Endothelial cell of umbilical vein (primary cell): ENCODE measurements at regions of chr4 and their contacts with region 1.

Region 1: DNA sequence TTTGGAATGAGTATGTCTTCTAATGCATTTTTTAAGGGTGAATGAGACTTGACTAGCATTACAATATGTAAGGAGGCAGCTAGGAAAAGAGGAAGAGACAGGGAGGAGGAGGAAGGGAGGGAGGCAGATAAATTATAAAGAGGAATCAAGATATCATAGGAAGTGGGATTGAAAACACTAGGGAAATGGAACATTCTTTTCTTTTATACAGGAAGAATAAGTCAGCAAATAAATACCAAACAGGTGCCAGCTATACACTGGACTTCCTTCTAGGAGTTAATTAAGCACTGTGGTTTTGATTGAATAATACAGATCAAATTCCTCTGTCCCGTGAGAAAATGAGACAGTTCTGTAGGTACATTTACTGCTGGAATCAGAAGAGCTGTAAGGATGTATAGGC is 78.6 kb downstream of the PACRGL start:
- DNase-seq: peak; percentile 85
- H3K4me3 ChIP-seq: no peak overlapping the region
- H3K27ac ChIP-seq: peak overlapping the region; percentile 80
- H3K4me1 ChIP-seq: peaks cover 18% of the 10 kb centered on the region
- H3K27me3 ChIP-seq: no peaks in the 10 kb centered on the region
- CTCF ChIP-seq: no peak
- POLR2A ChIP-seq: peak; percentile 60

Region 2: GRCh38 chr4:21012851-21013331 is 234.0 kb after region 1 on chr4:
- CTCF ChIA-PET with region 1: interaction called, 8 read pairs
- POLR2A ChIA-PET with region 1: no interaction called
- dilution Hi-C with region 1: no loop called
- intact Hi-C with region 1: loop called (anchors 1 kb)
- DNase-seq: peak; percentile 76
- H3K4me3 ChIP-seq: no peak overlapping the region
- H3K27ac ChIP-seq: peak overlapping the region; percentile 89
- H3K4me1 ChIP-seq: peaks cover 31% of the 10 kb centered on the region
- H3K27me3 ChIP-seq: no peaks in the 10 kb centered on the region
- CTCF ChIP-seq: no peak
- POLR2A ChIP-seq: no peak

Region 3: DNA sequence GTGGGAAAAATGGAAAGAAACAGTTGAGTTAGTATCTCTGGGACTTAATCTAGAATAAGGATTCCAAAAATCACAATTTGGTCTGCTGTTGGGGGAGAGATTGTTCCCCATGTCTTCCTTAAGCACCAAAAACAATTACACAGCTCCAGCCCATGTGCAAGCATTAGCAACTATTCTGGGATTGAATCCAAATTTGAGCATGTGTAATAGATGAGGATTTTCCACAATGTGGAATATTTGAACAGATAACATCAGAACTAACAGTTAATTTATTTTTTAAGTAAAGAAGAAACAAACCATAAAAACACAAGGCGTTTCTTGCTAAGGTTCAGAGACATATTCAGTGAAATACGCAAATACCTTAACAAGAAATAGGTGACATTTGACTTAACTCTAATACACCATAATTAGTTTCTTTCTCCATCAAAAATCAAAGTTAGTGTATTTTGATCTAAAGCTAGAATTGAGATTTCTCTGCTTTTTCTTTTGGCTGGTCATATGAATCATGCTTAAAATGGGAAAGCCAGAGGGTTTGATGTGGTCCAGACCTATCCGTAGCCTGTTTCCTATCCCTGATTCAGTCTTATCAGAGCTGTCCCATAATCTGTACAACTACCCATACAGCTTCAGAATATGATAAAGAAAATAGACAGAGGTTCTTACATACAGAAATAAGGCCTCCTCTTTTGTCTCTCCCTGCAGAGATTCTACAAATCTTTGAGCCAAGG is 334.8 kb after region 1 on chr4:
- CTCF ChIA-PET with region 1: interaction called, 27 read pairs
- POLR2A ChIA-PET with region 1: no interaction called
- dilution Hi-C with region 1: no loop called
- intact Hi-C with region 1: loop called (anchors 1 kb)
- DNase-seq: peak; percentile 84
- H3K4me3 ChIP-seq: no peak overlapping the region
- H3K27ac ChIP-seq: peak overlapping the region; percentile 94
- H3K4me1 ChIP-seq: peaks cover 22% of the 10 kb centered on the region
- H3K27me3 ChIP-seq: no peaks in the 10 kb centered on the region
- CTCF ChIP-seq: no peak
- POLR2A ChIP-seq: no peak

Region 4: DNA sequence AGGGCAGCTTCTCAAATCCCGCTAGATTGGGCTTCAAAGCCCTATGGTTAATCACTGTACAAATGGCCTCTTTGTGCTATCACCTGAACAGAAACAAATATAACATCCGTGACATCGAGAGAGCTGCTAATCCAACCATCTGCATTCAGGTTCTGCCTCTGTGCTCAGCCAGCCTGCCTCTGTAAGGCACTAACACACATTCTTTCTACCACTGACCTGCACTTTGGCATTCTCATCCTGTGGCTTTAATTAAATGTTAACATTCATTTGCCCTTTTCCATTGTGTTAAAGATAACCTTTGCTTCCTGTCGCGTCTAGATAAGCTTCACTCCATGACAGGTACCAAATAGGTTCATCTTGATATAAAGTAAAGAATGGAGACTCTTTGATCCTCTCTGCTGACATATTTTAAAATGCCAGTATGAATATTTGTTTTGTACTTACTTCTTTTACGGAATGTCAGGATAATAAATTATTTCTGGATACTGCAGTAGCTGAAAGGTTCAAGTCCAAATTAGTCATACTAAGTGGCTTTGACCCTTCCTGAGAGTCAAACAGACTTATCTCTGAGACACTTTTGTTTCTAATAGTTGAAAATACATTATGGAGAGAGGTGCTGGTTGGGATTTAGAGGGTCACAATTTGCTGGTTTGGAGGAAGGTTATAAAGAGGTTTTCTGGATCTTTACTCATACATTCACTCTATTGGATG is 427.1 kb after region 1 on chr4:
- CTCF ChIA-PET with region 1: interaction called, 10 read pairs
- POLR2A ChIA-PET with region 1: no interaction called
- dilution Hi-C with region 1: no loop called
- intact Hi-C with region 1: loop called (anchors 5 kb)
- DNase-seq: peak; percentile 63
- H3K4me3 ChIP-seq: no peak overlapping the region
- H3K27ac ChIP-seq: no peak overlapping the region
- H3K4me1 ChIP-seq: peaks cover 14% of the 10 kb centered on the region
- H3K27me3 ChIP-seq: no peaks in the 10 kb centered on the region
- CTCF ChIP-seq: no peak
- POLR2A ChIP-seq: no peak